Dendritic cell treated with granulocyte-macrophage colony-stimulating factor and Interleukin-4, amounts not matched to agents 40 ng/mL and 50 ng/mL, for 4 days (primary cell): ENCODE measurements at regions of chr4 and their contacts with region 1.

Region 1: DNA sequence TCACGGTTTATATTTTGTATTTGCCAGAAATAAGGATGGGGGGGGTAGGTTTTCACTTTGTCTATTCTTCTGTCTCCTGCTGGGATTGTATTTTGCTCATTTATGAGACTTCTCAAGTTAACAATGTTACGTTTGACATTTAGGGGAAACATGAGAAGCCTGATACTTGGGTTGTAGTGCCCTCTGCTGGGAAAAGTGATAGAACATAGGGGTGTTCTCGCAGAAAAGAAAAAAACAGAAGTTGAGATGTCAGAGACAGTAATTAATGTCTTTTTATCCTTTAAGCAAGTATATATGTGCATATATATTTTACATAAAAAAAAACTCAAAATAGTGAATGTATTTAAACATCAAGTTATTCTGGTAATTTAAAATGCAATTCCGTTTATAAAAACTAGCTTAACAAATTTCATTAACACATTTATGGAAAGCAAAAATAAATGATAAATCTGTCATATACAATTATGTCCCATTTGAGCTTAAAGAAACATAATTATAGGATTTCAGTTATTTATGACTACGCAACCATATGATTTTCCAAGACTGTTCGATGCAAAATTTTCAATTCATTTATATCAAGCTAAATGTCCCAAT is 46.0 kb upstream of the TMPRSS11F start:
- H3K4me3 Mint-ChIP-seq: no peak overlapping the region
- H3K27ac Mint-ChIP-seq: no peak overlapping the region
- H3K4me1 Mint-ChIP-seq: peaks cover under 1% of the 10 kb centered on the region
- H3K27me3 Mint-ChIP-seq: no peaks in the 10 kb centered on the region

Region 2: DNA sequence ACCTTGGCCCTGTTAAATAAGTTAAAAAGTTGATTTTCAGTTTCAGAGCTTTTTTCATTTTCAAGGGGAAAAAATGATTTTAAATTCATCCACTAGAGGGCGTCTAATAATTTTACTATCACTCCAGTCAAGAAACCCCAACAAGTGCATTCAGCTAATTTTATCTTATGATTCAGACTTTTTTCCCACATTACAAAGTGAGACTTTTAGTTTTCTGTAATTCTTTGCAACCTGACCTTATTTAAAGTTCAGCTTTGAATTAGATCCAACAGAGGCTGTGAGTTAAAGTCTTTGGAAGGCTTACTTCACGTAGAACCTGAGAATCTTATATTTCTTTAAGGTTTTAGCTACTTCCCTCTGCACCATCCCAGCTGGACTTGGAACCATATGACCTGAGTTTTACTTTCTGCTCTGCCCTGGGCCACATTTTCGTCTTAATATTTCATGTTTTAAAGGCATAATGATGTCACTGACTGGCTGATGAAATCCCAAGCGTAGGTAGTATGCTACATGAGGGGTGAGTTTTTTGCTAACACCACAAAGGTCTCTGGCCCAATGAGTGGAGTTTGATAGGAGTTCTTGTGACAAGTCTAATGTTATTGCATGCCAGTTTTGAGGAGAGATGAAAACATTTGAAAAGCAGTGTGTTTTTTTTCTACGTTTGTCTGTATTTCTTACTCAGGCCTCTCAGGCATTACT is 428.7 kb before region 1 on chr4:
- intact Hi-C with region 1: loop called (anchors 5 kb)
- H3K4me3 Mint-ChIP-seq: no peak overlapping the region
- H3K27ac Mint-ChIP-seq: no peak overlapping the region
- H3K4me1 Mint-ChIP-seq: no peaks in the 10 kb centered on the region
- H3K27me3 Mint-ChIP-seq: no peaks in the 10 kb centered on the region

Region 3: GRCh38 chr4:67871867-67872266 is 303.8 kb before region 1 on chr4:
- intact Hi-C with region 1: loop called (anchors 2 kb)
- H3K4me3 Mint-ChIP-seq: no peak overlapping the region
- H3K27ac Mint-ChIP-seq: no peak overlapping the region
- H3K4me1 Mint-ChIP-seq: no peaks in the 10 kb centered on the region
- H3K27me3 Mint-ChIP-seq: no peaks in the 10 kb centered on the region

Region 4: GRCh38 chr4:67988991-67989390 is 186.7 kb before region 1 on chr4:
- intact Hi-C with region 1: loop called (anchors 5 kb)
- H3K4me3 Mint-ChIP-seq: no peak overlapping the region
- H3K27ac Mint-ChIP-seq: no peak overlapping the region
- H3K4me1 Mint-ChIP-seq: no peaks in the 10 kb centered on the region
- H3K27me3 Mint-ChIP-seq: no peaks in the 10 kb centered on the region

Region 5: DNA sequence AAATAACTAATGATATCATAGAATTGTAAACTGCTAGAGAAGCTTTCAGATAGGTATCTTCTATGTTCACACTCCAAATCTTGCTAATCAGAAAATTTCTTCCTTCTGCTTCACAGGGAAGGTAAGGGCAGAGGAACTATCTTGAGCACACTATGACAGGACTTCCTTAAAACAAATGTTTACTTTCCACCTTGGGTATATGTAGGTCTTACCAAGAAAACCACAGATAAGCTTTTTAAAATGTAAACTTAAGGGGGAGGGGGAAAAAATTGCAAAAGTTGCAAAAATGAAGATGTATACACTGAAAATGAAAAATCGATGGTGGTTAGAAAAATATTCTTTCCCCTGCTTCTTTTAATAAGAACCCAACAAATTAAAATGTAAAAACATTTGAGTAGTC is 143.4 kb after region 1 on chr4:
- intact Hi-C with region 1: no loop called
- H3K4me3 Mint-ChIP-seq: no peak overlapping the region
- H3K27ac Mint-ChIP-seq: no peak overlapping the region
- H3K4me1 Mint-ChIP-seq: no peaks in the 10 kb centered on the region
- H3K27me3 Mint-ChIP-seq: no peaks in the 10 kb centered on the region